ENCODE measurements at regions of chr4 and their contacts with region 1.

Region 1: DNA sequence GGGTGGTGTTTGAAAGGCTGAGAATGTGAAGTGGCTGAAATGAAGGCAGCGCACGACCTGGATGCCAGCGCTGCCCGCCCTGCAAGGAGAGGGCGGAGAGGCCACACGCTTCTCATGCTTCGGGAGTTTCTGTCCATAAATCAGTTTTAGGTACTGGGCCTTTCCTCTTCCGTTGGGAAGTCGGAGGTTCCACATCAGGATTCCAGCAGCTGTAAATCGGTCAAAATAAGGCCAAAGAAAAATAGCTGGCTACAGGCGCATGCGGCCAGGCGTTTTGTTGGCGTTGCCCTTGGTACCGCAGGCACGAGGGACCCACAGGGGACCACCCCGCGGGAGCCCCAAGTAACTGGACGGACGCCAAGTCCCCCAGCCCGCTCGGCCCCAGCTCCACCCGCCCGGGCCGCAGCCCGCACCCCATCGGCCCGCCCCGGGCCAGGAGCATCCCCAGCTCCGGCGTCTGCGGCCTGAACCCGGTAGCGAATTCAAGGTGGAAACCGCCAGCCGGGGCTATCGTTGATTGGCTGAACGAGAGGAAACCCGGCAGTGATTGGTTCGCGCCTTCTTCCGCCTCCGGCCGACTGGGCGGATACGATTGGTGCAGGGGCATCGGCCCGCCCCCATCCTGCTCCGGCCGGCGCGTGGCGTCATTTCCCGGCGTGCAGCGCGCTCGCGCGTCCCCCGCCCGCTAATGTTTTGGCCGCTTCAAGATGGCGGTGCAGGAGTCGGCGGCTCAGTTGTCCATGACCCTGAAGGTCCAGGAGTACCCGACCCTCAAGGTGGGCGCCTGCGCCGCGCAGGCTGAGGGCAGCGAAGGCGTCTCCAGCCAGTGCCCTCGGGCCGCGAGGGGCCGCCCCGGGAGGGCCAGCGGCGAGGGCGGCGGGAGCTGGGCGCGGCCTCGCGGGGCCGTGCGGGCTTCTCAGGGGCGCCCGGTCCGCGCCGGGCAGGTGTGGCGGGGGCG is at the start of gene MAEA:
- DNase-seq: peak; percentile 94 to 98 (median 96)
- ATAC-seq: peak; percentile 97
- H3K4me3 ChIP-seq: peak within 1 kb of the TSS; percentile 57 to 92
- H3K4me3 Mint-ChIP-seq: peak within 1 kb of the TSS; percentile 92
- H3K27ac ChIP-seq: peak within 1 kb of the TSS; percentile 74 to 80
- H3K27ac Mint-ChIP-seq: peak within 1 kb of the TSS; percentile 91
- H3K4me1 ChIP-seq: peaks cover 38% of the 10 kb centered on the region
- H3K4me1 Mint-ChIP-seq: peaks cover 42% of the 10 kb centered on the region
- H3K27me3 ChIP-seq: no peaks in the 10 kb centered on the region
- H3K27me3 Mint-ChIP-seq: no peaks in the 10 kb centered on the region
- CTCF ChIP-seq: no peak
- total RNA-seq, gene MAEA: 74.6 to 77.6 TPM

Region 2: DNA sequence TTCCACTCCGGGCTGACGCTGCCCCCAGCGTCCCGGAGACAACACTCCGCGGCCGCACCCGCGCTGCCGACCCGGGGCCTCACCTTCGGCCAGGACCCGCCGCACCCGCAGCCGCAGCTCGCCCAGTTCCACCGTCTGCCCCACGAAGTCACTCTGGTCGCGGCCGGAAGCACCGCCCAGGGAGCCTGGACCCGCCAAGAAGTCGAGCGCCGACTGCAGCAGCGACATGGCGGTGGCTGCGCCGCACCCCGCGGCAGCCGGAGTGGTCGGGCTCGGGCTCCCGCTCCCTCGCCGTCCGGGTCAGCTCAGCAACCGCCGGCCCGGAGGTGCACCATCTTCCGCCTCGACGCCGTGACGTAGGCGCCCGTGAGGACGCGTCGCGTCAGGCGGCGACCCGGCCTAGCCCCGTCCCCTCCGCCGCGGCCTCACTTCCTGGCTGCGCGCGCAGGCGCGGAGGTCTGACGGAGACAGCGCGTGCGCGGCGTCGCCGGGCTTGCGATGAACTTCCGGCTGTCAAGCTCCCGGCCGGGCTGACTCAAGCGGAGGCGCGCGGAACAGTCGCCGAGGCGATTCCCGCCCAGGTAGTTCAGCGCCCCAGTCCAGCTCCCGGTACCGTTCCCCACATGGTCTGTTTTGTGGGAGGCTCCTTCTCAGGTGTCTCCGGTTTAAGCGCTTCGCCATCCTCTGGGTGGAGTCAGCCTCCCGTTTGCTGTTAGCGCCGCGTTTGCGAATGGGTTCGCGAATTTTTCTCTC is 357.4 kb before region 1 on chr4 and contains the starts of genes GAK and TMEM175:
- CTCF ChIA-PET with region 1: no interaction called
- POLR2A ChIA-PET with region 1: no interaction called
- intact Hi-C with region 1: loop called in 1 of 2 experiments (anchors 1 kb)
- DNase-seq: peak; percentile 90 to 99 (median 96)
- ATAC-seq: peak; percentile 91
- H3K4me3 ChIP-seq: peak within 1 kb of the TSS; percentile 91 to 96
- H3K4me3 Mint-ChIP-seq: peak within 1 kb of the TSS; percentile 96
- H3K27ac ChIP-seq: peak within 1 kb of the TSS; percentile 91 to 92
- H3K27ac Mint-ChIP-seq: peak within 1 kb of the TSS; percentile 97
- H3K4me1 ChIP-seq: peaks cover 39% of the 10 kb centered on the region
- H3K4me1 Mint-ChIP-seq: peaks cover 51% of the 10 kb centered on the region
- H3K27me3 ChIP-seq: no peaks in the 10 kb centered on the region
- H3K27me3 Mint-ChIP-seq: no peaks in the 10 kb centered on the region
- CTCF ChIP-seq: no peak
- total RNA-seq, gene GAK: 161 to 162 TPM
- total RNA-seq, gene TMEM175: 44.9 to 47.2 TPM

Region 3: GRCh38 chr4:1011022-1011694 is 278.3 kb before region 1 on chr4 and contains the start of gene FGFRL1:
- CTCF ChIA-PET with region 1: no interaction called
- POLR2A ChIA-PET with region 1: no interaction called
- intact Hi-C with region 1: loop called in 1 of 2 experiments (anchors 1 kb)
- DNase-seq: peak; percentile 83 to 94 (median 93)
- ATAC-seq: peak; percentile 55
- H3K4me3 ChIP-seq: peak within 1 kb of the TSS; percentile 65 to 86
- H3K4me3 Mint-ChIP-seq: peak within 1 kb of the TSS; percentile 89
- H3K27ac ChIP-seq: peak within 1 kb of the TSS; percentile 65 to 71
- H3K27ac Mint-ChIP-seq: peak within 1 kb of the TSS; percentile 96
- H3K4me1 ChIP-seq: peaks cover 26% of the 10 kb centered on the region
- H3K4me1 Mint-ChIP-seq: peaks cover 12% of the 10 kb centered on the region
- H3K27me3 ChIP-seq: peaks cover 0 to 9% of the 10 kb centered on the region in 2 experiments
- H3K27me3 Mint-ChIP-seq: peaks cover 25% of the 10 kb centered on the region
- CTCF ChIP-seq: no peak
- total RNA-seq, gene FGFRL1: 26.3 to 30.2 TPM

Region 4: GRCh38 chr4:1200425-1201035 is 89.0 kb before region 1 on chr4:
- CTCF ChIA-PET with region 1: no interaction called
- POLR2A ChIA-PET with region 1: no interaction called
- intact Hi-C with region 1: loop called in 1 of 2 experiments (anchors 1 kb)
- DNase-seq: peak in 6 of 9 experiments; percentile 25 to 71 (median 54)
- ATAC-seq: no peak
- H3K4me3 ChIP-seq: peak overlapping the region; percentile 69 to 90
- H3K4me3 Mint-ChIP-seq: peak overlapping the region; percentile 87
- H3K27ac ChIP-seq: peak overlapping the region; percentile 87 to 91
- H3K27ac Mint-ChIP-seq: peak overlapping the region; percentile 95
- H3K4me1 ChIP-seq: peaks cover 47% of the 10 kb centered on the region
- H3K4me1 Mint-ChIP-seq: peaks cover 53% of the 10 kb centered on the region
- H3K27me3 ChIP-seq: no peaks in the 10 kb centered on the region
- H3K27me3 Mint-ChIP-seq: no peaks in the 10 kb centered on the region
- CTCF ChIP-seq: no peak

Region 5: GRCh38 chr4:1266881-1267763 is 22.4 kb before region 1 on chr4:
- CTCF ChIA-PET with region 1: interaction called, 22 read pairs
- POLR2A ChIA-PET with region 1: no interaction called
- intact Hi-C with region 1: loop called (anchors 1 to 2 kb)
- DNase-seq: peak in 2 of 9 experiments; percentile 23 to 64
- ATAC-seq: peak; percentile 78
- H3K4me3 ChIP-seq: peak overlapping the region in 1 of 2 experiments; percentile 46
- H3K4me3 Mint-ChIP-seq: peak overlapping the region; percentile 76
- H3K27ac ChIP-seq: peak overlapping the region; percentile 57 to 73
- H3K27ac Mint-ChIP-seq: peak overlapping the region; percentile 93
- H3K4me1 ChIP-seq: peaks cover 12% of the 10 kb centered on the region
- H3K4me1 Mint-ChIP-seq: peaks cover 20% of the 10 kb centered on the region
- H3K27me3 ChIP-seq: no peaks in the 10 kb centered on the region
- H3K27me3 Mint-ChIP-seq: no peaks in the 10 kb centered on the region
- CTCF ChIP-seq: no peak

Region 6: DNA sequence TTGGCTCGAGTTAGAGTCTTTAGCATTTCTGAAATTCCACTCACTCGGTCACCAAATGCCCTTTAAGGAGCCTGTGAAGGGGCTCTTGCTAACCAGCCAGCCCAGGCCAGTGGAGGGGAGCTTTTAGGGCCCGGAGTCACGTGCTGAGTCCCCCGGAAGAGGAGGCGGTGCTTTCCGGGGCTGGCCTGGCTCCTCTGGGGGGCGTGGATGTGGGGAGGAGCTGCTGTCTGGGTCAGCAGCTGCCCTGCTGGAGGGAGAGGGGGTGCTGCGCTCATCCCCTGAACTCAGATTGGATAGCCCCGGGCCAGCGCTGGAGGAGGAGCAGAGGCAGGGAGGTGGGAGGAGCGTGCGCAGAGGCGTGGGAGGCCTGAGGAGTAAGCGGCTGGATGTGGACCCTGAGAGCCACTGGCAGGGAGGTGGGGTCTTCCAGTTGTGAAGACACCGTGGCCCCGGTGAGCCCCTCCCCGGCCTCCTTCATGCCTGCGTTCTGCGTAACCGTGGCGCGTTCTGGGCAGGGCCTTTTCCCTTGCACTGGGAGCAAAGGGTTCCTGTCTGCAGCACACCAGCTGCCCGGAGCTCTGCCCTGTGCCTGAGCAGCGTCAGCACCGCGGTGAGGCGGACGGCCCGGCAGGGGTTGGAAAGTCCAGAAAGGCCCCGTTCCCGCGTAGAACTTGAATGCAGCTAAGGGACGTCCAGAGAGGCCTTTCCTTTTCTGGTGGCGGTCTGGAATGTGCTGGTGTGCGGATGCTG is 19.9 kb after region 1 on chr4:
- CTCF ChIA-PET with region 1: interaction called, 3 read pairs
- POLR2A ChIA-PET with region 1: no interaction called
- intact Hi-C with region 1: loop called in 1 of 2 experiments (anchors 1 kb)
- DNase-seq: peak in 8 of 9 experiments; percentile 39 to 80 (median 66)
- ATAC-seq: peak; percentile 74
- H3K4me3 ChIP-seq: peak overlapping the region; percentile 33 to 49
- H3K4me3 Mint-ChIP-seq: peak overlapping the region; percentile 79
- H3K27ac ChIP-seq: peak overlapping the region in 1 of 2 experiments; percentile 37
- H3K27ac Mint-ChIP-seq: peak overlapping the region; percentile 85
- H3K4me1 ChIP-seq: peaks cover 43% of the 10 kb centered on the region
- H3K4me1 Mint-ChIP-seq: peaks cover 59% of the 10 kb centered on the region
- H3K27me3 ChIP-seq: no peaks in the 10 kb centered on the region
- H3K27me3 Mint-ChIP-seq: no peaks in the 10 kb centered on the region
- CTCF ChIP-seq: no peak

Region 7: DNA sequence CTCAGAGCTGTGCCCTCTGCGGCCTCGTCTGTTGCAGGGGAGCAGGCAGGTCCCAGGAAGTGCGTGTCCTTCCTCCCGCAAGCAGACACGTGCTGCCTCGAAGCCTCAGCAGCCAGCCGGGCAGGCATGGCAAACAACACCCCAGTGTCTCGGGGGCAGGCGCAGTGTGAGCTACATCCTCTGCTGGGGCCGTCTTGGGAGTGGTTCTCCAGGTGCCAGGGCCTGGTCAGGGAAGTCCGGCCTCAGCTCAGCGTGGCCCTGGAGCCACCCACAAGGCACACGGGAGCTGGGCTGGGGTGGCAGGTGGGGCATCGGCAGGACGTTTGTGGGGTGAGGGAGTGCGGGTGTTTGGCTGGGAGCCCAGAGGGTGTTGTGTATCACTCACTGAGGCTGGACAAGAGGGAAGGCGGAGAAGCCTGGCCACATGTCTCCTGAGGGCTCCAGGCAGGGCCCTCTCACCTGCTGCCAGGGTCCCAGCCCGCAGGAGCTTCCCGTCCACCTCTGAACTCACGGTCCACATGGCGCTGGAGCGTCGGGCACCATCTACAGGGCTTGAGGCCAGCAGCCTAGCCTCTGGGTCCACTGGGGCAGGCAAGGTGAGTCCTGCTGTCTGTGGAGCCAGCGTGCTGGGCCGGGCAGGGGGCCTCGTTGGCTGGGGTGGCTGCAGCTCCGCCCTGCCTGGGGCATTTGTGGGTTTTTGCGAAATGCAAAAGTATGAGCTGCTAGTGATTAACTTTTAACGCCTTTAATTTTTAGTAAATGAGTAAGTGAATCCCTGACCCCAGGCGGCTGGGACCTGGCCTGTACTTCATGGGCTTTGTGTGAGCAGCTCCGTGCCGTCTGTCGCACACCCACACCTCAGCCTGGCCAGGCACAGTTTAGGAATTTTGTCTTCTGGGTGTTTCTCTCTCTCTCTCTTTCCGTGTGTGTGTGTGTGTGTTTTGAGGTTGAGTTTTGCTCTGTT is 40.2 kb after region 1 on chr4:
- CTCF ChIA-PET with region 1: no interaction called
- POLR2A ChIA-PET with region 1: interaction called, 5 read pairs
- intact Hi-C with region 1: loop called in 1 of 2 experiments (anchors 1 kb)
- DNase-seq: peak in 6 of 9 experiments; percentile 27 to 74 (median 68)
- ATAC-seq: peak; percentile 49
- H3K4me3 ChIP-seq: no peak overlapping the region
- H3K4me3 Mint-ChIP-seq: peak overlapping the region; percentile 50
- H3K27ac ChIP-seq: peak overlapping the region in 1 of 2 experiments; percentile 78
- H3K27ac Mint-ChIP-seq: peak overlapping the region; percentile 93
- H3K4me1 ChIP-seq: peaks cover 40% of the 10 kb centered on the region
- H3K4me1 Mint-ChIP-seq: peaks cover 24% of the 10 kb centered on the region
- H3K27me3 ChIP-seq: no peaks in the 10 kb centered on the region
- H3K27me3 Mint-ChIP-seq: no peaks in the 10 kb centered on the region
- CTCF ChIP-seq: no peak

Region 8: GRCh38 chr4:2041234-2042130 is 752.0 kb after region 1 on chr4:
- CTCF ChIA-PET with region 1: no interaction called
- POLR2A ChIA-PET with region 1: no interaction called
- intact Hi-C with region 1: no loop called
- DNase-seq: peak; percentile 51 to 88 (median 81)
- ATAC-seq: peak; percentile 62
- H3K4me3 ChIP-seq: peak overlapping the region; percentile 72 to 80
- H3K4me3 Mint-ChIP-seq: peak overlapping the region; percentile 75
- H3K27ac ChIP-seq: no peak overlapping the region
- H3K27ac Mint-ChIP-seq: no peak overlapping the region
- H3K4me1 ChIP-seq: peaks cover 12% of the 10 kb centered on the region
- H3K4me1 Mint-ChIP-seq: peaks cover 2% of the 10 kb centered on the region
- H3K27me3 ChIP-seq: peaks cover 5 to 21% of the 10 kb centered on the region in 2 experiments
- H3K27me3 Mint-ChIP-seq: peaks cover 17% of the 10 kb centered on the region
- CTCF ChIP-seq: no peak

Region 9: DNA sequence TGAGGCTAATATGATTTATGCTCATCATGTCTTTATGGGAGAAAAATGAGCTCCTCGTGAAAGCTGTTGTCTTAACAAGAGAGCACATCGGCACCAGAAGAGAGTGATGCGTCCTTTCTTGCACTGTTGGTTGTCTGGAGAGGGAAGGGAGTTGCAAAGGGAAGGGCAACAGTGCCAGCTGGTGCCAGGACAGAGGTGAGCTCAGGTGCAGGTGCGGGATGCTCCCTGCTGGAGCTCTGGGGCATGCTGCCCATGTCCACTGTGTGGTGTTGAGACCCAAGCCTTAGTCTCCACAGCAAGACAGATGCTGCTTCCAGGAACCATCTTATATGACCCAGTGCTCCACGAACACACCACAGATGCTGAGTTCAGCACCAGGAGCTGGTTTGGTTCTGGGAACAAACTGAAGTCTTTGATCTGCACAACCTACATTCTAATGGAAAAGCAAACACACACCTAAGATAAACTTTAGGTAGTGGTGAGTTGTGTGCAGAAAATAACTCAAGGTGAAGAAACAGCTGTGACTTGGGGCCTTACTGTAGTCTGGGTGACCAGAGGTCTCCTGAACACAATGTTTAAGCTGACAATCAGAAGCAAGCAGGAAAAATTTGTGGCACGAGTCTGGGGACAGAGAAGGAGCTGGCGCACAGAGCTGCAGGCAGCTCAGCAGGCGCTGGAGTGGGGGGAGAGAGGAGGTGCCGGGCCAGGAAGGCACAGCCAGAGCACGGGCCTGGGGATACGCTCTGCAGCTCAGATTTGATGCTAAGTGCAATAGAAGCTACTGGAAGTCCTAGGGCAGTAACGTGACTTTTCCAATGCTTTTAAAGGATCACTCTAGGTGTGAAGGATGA is 879.2 kb after region 1 on chr4:
- CTCF ChIA-PET with region 1: no interaction called
- POLR2A ChIA-PET with region 1: no interaction called
- intact Hi-C with region 1: no loop called
- DNase-seq: no peak
- ATAC-seq: no peak
- H3K4me3 ChIP-seq: no peak overlapping the region
- H3K4me3 Mint-ChIP-seq: no peak overlapping the region
- H3K27ac ChIP-seq: no peak overlapping the region
- H3K27ac Mint-ChIP-seq: no peak overlapping the region
- H3K4me1 ChIP-seq: peaks cover 16% of the 10 kb centered on the region
- H3K4me1 Mint-ChIP-seq: peaks cover 20% of the 10 kb centered on the region
- H3K27me3 ChIP-seq: no peaks in the 10 kb centered on the region
- H3K27me3 Mint-ChIP-seq: no peaks in the 10 kb centered on the region
- CTCF ChIP-seq: no peak

Measured in CD8-positive, alpha-beta T cell (primary cell).